Body of pancreas (tissue), 4 donors: ENCODE measurements at regions of chr13 and their contacts with region 1.

Region 1: DNA sequence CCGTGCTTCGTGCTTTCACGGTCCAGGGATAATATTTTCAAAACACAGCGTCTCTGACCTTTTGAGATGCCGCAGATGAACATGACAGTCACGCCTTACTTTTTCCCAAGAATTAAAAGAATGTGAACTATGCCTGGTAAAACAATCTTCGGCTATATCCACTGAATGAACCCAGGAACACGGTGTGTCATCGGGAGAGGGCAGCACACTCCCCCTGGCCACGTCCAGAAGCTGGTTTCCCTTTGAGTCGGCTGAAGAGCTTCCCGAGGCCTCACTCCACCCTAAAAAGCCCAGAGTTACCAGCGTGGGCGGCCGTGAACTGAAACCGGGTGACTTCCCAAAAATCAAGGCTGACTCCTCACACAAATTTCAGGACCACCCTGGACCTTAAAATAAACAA is 22.9 kb upstream of the SHISA2 start:
- DNase-seq: no peak
- ATAC-seq: no peak
- H3K4me3 ChIP-seq: no peak overlapping the region
- H3K27ac ChIP-seq: no peak overlapping the region
- H3K4me1 ChIP-seq: no peaks in the 10 kb centered on the region
- H3K27me3 ChIP-seq: no peaks in the 10 kb centered on the region
- CTCF ChIP-seq: no peak
- POLR2A ChIP-seq: no peak

Region 2: DNA sequence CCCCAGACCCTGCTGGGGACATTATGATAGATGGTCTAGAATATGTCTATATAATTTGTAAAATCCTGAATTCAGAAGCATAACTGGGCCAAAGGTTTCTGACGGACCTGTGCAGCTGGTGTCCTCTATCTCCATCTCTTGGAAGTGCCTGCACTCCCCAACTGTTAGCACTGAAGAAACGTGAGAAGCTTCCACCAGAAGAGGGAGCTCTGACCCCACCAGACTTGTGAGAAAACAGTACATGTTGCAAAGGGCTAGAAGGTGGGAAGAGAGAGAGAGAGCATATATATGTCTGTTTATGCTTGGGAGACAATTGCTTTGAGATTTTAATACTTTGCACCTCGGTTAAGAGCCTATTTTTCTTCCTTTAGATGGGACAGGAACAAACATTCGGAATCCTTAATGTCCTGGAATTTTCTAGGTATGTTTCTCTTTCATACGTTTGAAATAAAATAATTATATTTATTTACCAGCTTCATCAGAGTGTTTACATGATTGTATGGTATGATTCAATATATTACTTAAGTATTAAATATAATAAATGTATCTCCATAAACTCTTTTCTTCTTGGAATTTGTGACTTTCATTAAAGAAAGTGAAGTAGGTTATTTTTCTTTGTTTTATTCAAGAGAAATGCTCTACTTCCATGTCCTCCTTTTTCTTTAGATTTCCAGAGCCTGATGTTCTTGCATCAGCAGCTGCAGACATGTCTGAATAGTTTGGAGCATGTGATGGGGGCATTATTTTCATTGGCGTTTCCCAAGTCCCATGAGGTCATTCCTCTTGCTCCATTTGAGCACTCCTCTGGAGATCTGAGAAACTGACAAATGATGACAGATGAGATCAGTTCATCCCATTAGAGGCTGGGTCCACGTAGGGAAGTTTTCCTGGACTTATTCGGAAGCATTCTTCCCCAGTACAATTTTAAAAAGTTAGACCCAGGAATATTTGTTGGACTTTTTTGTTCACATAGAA is 500.0 kb before region 1 on chr13:
- intact Hi-C with region 1: loop called (anchors 5 kb)
- DNase-seq: peak; percentile 78 to 86 (median 84)
- ATAC-seq: peak; percentile 88
- H3K4me3 ChIP-seq: no peak overlapping the region
- H3K27ac ChIP-seq: no peak overlapping the region
- H3K4me1 ChIP-seq: no peaks in the 10 kb centered on the region
- H3K27me3 ChIP-seq: peaks cover 0 to 3% of the 10 kb centered on the region in 2 donors
- CTCF ChIP-seq: peak; percentile 56 to 94 (median 88)
- POLR2A ChIP-seq: no peak

Region 3: GRCh38 chr13:25928941-25929505 is 145.7 kb before region 1 on chr13:
- intact Hi-C with region 1: no loop called
- DNase-seq: no peak
- ATAC-seq: no peak
- H3K4me3 ChIP-seq: no peak overlapping the region
- H3K27ac ChIP-seq: no peak overlapping the region
- H3K4me1 ChIP-seq: no peaks in the 10 kb centered on the region
- H3K27me3 ChIP-seq: no peaks in the 10 kb centered on the region
- CTCF ChIP-seq: no peak
- POLR2A ChIP-seq: no peak